ENCODE measurements at regions of chr7 and their contacts with region 1.

Region 1: DNA sequence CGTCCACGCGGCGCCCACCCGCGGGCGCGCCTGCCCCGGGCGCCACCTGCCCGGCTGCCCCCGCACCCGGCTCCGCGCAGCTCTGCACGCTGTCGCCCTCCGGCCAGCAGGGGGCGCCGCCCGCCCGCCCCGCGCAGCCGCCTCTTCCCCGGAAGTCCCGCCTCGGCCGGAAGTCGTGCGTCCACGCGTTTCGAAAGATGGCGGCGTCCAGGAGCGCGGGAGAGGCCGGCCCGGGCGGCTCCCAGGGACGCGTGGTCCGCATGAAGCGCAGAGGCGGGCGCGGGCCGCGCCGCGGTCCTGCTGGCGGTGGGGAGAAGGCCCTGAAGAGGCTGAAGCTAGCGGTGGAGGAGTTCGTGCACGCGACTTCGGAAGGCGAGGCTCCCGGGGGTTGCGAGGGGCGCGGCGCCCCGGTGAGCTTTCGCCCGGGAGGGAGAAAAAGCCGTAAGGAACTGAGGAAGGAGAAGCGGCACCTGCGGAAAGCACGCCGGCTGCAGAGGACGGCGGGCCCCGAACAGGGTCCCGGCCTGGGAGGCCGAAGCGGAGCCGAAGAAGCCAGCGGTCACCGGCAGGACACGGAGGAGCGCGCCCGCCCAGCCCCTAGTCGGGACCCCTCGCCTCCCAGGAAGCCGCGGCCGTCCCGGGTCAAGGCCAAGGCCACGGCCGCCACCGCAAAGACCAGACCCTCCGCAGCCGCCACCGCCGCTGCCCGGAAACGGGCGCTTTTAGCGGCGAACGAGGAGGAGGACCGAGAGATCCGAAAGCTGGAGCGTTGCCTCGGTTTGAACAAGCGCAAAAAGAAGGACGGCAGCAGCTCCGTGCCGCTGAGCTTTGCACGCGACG is at the start of gene NOM1:
- DNase-seq: peak; percentile 93
- ATAC-seq: peak; percentile 95
- H3K4me3 ChIP-seq: peak within 1 kb of the TSS; percentile 49 to 93 (median 73)
- H3K4me3 Mint-ChIP-seq: peak within 1 kb of the TSS; percentile 96
- H3K27ac ChIP-seq: peak within 1 kb of the TSS in 1 of 2 donors; percentile 65
- H3K27ac Mint-ChIP-seq: peak within 1 kb of the TSS; percentile 68
- H3K4me1 ChIP-seq: peaks cover 16 to 31% of the 10 kb centered on the region in 2 donors
- H3K4me1 Mint-ChIP-seq: peaks cover 20% of the 10 kb centered on the region
- H3K27me3 ChIP-seq: peaks cover 0 to 1% (median 0%) of the 10 kb centered on the region in 4 experiments
- H3K27me3 Mint-ChIP-seq: peaks cover 4% of the 10 kb centered on the region
- CTCF ChIP-seq: peak; percentile 74
- total RNA-seq, gene NOM1: 38.3 and 41.0 TPM in 2 replicates

Region 2: DNA sequence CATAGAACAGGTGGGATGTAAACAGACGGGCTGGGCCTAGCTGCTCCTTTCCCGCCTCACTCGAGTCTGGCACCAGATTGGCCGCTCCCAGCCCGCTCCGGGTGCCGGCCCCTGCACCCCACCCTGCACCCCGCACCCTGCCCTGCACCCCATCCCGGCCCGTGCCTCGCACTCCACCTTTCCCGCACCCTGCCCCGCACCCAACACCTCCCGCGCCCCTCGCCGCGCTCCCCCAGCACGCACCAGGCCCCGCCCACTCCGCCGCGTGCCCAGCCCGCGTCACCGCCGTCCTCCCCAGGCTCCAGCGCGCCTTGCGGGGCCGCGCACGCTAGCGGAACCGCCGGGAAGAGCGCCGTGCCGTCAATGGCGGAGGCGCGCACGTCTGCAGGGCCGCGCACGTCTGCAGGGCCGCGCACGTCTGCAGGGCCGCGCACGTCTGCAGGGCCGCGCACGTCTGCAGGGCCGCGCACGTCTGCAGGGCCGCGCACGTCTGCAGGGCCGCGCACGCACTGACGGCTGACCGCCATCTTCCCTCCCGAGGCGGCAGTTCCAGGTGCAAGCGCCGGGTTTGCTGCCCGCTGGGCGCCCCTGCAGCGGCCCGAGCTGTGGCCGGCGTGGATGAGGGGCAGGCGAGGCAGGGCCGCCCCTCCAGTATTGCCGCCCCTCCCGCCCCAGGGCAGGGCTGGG is 188.8 kb after region 1 on chr7 and contains the start of gene UBE3C:
- CTCF ChIA-PET with region 1: interaction called, 3 read pairs
- POLR2A ChIA-PET with region 1: no interaction called
- intact Hi-C with region 1: loop called (anchors 1 kb)
- DNase-seq: peak; percentile 96
- ATAC-seq: peak; percentile 85
- H3K4me3 ChIP-seq: peak within 1 kb of the TSS; percentile 36 to 88 (median 67)
- H3K4me3 Mint-ChIP-seq: peak within 1 kb of the TSS; percentile 85
- H3K27ac ChIP-seq: peak within 1 kb of the TSS; percentile 80 to 90
- H3K27ac Mint-ChIP-seq: peak within 1 kb of the TSS; percentile 95
- H3K4me1 ChIP-seq: peaks cover 19 to 29% of the 10 kb centered on the region in 2 donors
- H3K4me1 Mint-ChIP-seq: peaks cover 37% of the 10 kb centered on the region
- H3K27me3 ChIP-seq: no peaks in the 10 kb centered on the region
- H3K27me3 Mint-ChIP-seq: no peaks in the 10 kb centered on the region
- CTCF ChIP-seq: no peak
- total RNA-seq, gene UBE3C: 64.2 and 66.5 TPM in 2 replicates